ENCODE measurements at regions of chrX and their contacts with region 1.

Region 1: DNA sequence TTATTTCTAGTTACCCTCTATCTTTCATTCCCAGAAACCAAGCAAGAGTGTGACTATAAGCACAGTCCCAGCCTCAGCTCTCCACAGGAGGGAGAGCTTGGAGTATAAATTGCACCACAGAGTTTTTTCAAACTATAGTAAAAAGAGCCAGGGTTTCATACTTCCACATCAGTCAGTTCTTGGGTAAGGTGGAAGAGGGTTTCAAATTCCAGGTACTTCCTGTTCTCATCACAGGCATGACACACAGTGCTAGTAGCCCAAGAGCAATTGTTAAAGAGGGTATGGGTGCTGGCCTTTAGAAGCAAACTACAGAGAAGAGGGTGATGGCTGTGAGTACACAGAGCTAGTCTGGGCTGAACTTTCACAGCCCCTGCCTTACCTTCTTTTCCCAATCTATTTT is 5.7 kb upstream of the IL1RAPL1 start:
- DNase-seq: no peak
- H3K4me3 ChIP-seq: no peak overlapping the region
- H3K27ac ChIP-seq: no peak overlapping the region
- H3K4me1 ChIP-seq: no peaks in the 10 kb centered on the region
- H3K27me3 ChIP-seq: no peaks in the 10 kb centered on the region
- CTCF ChIP-seq: no peak
- EP300 ChIP-seq: no peak
- POLR2A ChIP-seq: no peak

Region 2: GRCh38 chrX:28628120-28628519 is 46.6 kb after region 1 on chrX:
- in situ Hi-C with region 1: no loop called
- intact Hi-C with region 1: loop called (anchors 2 kb)
- DNase-seq: no peak
- H3K4me3 ChIP-seq: no peak overlapping the region
- H3K27ac ChIP-seq: no peak overlapping the region
- H3K4me1 ChIP-seq: no peaks in the 10 kb centered on the region
- H3K27me3 ChIP-seq: no peaks in the 10 kb centered on the region
- CTCF ChIP-seq: no peak
- EP300 ChIP-seq: no peak
- POLR2A ChIP-seq: no peak

Region 3: DNA sequence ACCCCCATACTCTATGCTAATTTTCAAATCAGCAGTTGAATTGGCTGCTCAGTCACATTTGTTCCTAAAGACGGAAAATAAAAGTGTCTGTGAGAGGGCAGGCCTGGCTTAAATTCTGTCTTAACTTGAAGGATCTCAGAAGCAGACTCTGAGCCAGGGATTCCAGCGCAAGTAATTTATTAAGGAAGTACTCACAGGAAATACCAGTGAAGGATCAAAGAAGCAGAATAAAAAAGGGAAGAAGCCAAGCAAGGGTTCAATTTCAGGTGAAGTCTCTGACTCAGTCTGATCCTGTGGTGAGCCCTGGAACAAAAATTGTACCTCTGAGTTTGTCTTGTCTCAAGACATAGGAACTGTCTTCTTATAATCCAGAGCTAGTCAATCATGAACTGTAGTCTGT is 57.9 kb after region 1 on chrX:
- in situ Hi-C with region 1: no loop called
- intact Hi-C with region 1: no loop called
- DNase-seq: no peak
- H3K4me3 ChIP-seq: no peak overlapping the region
- H3K27ac ChIP-seq: no peak overlapping the region
- H3K4me1 ChIP-seq: no peaks in the 10 kb centered on the region
- H3K27me3 ChIP-seq: no peaks in the 10 kb centered on the region
- CTCF ChIP-seq: no peak
- EP300 ChIP-seq: no peak
- POLR2A ChIP-seq: no peak

Measured in transverse colon (tissue), 4 donors.